ENCODE measurements at regions of chr1 and their contacts with region 1.

Region 1: DNA sequence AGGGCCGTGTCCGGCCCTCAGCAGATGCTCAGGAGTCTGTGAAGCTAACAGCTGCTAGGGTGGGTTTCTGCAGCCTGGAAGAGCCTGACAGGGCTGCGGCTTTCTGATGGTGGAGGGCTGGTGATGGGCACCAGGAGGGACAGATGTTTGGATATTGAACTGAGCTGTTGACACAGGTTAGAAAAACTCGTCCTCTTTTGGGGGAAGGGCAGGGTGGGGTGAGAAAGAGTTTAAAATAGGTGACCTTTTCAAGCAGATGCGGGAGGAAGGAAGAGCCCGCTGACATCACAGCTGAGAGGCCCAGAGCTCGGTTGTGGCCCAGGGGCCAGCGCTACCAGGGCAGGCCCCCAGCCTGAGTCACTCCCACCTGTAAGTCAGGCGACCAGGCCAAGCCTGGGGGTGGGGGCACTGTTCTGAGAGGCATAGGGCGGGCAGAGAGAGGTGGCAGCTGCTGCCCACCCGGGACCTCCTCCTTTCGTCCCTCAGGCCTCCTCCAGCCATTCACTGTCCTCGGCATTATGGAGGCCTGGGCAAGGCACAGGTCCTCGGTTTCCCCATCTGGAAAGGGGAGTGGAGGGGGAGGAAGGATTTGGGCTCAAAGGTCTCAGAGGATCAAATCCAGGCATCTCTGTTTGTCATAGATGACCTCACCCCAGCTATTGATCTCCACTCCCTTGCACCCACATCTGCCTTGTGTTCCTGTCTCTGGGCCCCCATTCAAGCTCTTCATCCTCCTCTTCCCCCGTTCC is 32.3 kb upstream of the ID3 start:
- DNase-seq: no peak
- H3K4me3 Mint-ChIP-seq: no peak overlapping the region
- H3K27ac Mint-ChIP-seq: peak overlapping the region; percentile 94
- H3K4me1 Mint-ChIP-seq: peaks cover 74% of the 10 kb centered on the region
- H3K27me3 Mint-ChIP-seq: no peaks in the 10 kb centered on the region
- CTCF ChIP-seq: no peak

Region 2: DNA sequence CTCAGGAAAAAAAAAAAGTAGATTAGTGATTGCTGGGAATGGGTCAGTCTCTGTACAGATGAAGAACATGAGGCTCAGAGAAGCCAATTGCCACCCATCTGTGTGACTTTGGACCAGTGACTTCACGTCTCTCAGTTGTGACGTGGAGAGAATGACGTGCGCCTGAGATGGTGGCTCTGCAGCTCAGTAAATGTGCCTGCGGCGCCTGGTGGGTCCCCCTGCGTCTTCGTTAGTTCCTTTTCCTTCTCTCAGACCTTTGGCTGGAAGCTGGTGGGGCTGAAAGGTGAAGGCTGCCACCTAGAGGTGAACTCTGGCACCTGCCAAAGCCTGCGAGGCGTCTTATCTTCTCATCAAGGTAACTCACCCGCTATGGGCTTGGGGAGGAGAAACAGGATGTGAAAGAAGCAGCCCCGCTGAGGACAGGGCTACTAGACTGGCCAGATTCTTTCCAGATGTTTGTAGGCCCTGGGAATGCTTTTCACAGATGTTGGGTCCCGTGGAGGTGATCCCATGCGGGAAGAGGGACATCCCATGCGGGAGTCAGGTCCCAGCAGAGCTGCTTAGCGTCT is 51.9 kb before region 1 on chr1:
- CTCF ChIA-PET with region 1: interaction called, 14 read pairs
- POLR2A ChIA-PET with region 1: no interaction called
- intact Hi-C with region 1: no loop called
- DNase-seq: peak; percentile 90
- H3K4me3 Mint-ChIP-seq: no peak overlapping the region
- H3K27ac Mint-ChIP-seq: no peak overlapping the region
- H3K4me1 Mint-ChIP-seq: peaks cover 18% of the 10 kb centered on the region
- H3K27me3 Mint-ChIP-seq: no peaks in the 10 kb centered on the region
- CTCF ChIP-seq: peak; percentile 91

Region 3: DNA sequence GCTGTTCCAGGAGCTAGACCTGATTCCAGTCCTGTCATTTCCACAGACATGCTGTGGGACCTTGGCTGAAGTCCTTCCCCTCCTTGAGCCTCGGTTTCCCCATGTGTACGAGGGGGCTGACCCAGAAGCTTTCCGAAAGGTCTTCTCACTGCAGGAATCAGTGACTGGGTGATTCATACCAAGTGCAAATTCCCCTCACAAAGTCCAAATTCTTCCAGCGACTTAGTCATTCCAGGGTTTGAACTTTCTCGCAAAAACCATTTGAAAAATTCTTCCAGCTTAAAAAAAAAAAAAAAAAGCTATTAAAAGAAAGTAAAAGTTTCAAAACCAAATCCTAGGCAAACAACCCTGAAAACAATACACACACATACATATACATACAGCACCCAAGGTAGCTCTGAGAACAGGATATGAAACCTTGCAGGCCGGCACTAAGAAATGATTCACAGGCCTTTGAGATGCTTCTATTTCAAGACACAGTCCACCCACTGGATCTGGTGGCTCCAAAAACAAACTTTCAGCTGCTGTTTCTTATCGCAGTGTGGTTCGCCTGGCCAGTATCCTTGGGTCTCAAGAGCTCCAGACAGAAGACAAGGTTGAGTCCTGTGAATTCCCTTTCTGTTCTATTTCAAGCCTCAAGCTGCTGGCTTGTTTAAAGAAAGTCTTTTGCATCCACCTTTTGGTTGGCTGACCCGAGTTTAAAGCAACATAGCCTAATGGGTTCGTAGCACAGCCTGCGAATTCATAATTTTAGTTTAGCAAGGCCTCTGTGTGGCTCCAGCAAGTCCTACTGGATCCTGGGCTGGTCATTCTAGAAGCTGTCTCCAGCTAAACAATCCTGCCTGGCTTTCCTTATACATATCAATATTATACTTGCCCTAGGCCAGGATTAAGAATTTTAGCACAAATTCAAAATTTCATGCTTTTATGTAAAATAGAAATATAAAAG is 14.3 kb before region 1 on chr1:
- CTCF ChIA-PET with region 1: interaction called, 4 read pairs
- POLR2A ChIA-PET with region 1: interaction called, 30 read pairs
- intact Hi-C with region 1: no loop called
- DNase-seq: peak; percentile 60
- H3K4me3 Mint-ChIP-seq: peak overlapping the region; percentile 49
- H3K27ac Mint-ChIP-seq: peak overlapping the region; percentile 92
- H3K4me1 Mint-ChIP-seq: peaks cover 22% of the 10 kb centered on the region
- H3K27me3 Mint-ChIP-seq: no peaks in the 10 kb centered on the region
- CTCF ChIP-seq: no peak

Region 4: DNA sequence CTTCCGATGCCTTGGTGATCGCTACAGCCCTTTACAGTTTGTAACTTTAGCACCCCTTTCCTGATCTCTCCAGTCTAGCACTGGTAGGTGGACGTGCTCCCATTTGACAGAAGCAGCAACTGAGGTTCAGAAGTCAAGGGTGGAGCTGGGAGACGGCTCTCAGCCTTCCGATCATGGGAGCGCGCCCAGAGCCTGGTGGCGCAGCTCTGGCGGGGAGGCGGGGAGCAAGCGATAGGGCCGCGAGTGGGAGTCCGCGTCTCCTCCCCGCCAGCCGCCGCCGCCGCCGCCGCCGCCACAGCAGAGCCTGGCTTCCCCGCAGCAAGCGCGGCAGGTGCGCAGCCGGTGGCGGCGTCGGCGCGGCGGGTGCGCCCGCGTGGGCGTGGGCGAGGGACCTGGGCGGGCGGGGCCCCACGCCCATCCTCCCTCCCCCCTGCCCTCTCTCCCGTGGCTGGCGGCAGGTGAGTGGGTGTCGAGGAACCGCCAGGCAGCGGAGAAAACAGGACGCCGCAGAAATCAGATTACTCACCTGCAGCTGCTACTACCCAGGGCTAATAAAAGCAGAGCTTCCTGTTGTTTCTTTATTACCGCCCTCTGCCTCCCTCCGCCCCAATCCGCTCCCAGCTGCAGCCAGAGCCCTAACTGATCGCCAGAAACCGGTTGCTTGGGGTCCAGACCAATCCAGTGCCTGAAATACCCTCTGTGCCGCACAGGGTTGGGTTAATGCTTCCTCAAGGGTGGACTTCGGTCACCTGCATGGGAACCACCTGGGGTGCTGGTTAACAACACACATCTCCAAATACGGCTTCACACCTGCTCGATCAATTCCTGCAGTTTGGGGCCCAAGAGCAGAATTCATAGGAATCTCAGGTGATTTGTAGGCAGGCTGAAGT is 27.9 kb after region 1 on chr1:
- CTCF ChIA-PET with region 1: interaction called, 3 read pairs
- POLR2A ChIA-PET with region 1: interaction called, 39 read pairs
- intact Hi-C with region 1: no loop called
- DNase-seq: peak; percentile 42
- H3K4me3 Mint-ChIP-seq: peak overlapping the region; percentile 53
- H3K27ac Mint-ChIP-seq: no peak overlapping the region
- H3K4me1 Mint-ChIP-seq: peaks cover 6% of the 10 kb centered on the region
- H3K27me3 Mint-ChIP-seq: no peaks in the 10 kb centered on the region
- CTCF ChIP-seq: no peak